ENCODE measurements at regions of chr17 and their contacts with region 1.

Region 1: GRCh38 chr17:75673487-75673886 is 6.3 kb downstream of the SAP30BP start:
- DNase-seq: no peak
- CTCF ChIP-seq: no peak

Region 2: GRCh38 chr17:75536371-75536770 is 137.1 kb before region 1 on chr17:
- CTCF ChIA-PET with region 1: no interaction called
- POLR2A ChIA-PET with region 1: no interaction called
- DNase-seq: no peak
- CTCF ChIP-seq: no peak

Region 3: DNA sequence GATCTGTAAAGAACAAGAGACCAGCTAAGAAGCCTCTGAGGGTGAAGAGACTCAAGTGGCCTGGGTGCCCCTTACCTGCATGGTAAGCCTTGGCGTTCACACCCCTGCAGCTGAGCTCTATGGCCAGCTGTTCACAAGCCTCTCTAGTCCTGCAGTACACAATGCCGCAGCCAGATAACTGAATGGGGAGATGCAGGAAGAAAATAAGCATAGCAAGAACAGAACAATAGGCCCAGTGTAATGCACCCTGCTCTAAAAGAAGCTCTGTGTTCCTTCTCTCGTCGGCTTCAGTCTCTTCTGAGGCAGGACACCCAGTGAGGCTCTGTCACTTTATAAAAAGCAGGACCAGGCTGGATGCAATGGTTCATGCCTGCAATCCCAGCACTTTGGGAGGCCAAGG is 12.0 kb before region 1 on chr17:
- CTCF ChIA-PET with region 1: interaction called, 13 read pairs
- POLR2A ChIA-PET with region 1: no interaction called
- DNase-seq: no peak
- CTCF ChIP-seq: no peak

Measured in GM10248 (cell line).